H1 (cell line): ENCODE measurements at regions of chr13 and their contacts with region 1.

Region 1: DNA sequence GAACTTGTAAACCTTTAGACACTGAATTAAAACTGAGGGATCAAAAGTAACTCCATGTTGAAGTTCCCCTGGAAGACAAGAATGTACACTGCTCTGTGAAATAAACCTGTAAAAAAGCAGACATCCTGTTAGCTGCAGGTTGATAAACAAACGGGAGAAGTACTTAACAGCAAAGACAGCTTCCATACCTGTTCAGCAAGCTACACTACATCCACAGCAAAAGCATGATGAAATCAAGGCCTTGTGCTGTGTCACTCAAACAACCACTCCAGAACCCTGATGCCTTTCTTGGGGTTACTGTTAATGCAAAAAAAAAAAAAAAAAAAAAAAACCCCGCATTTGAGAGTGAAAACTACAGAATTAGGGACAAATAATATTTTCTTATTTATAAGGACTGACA is 20.8 kb downstream of the ANKRD10 start:
- DNase-seq: no peak
- H3K4me3 ChIP-seq: no peak overlapping the region
- H3K27ac ChIP-seq: no peak overlapping the region
- H3K4me1 ChIP-seq: no peaks in the 10 kb centered on the region
- H3K27me3 ChIP-seq: no peaks in the 10 kb centered on the region
- CTCF ChIP-seq: no peak
- EP300 ChIP-seq: no peak
- POLR2A ChIP-seq: no peak
- RAD21 ChIP-seq: no peak

Region 2: DNA sequence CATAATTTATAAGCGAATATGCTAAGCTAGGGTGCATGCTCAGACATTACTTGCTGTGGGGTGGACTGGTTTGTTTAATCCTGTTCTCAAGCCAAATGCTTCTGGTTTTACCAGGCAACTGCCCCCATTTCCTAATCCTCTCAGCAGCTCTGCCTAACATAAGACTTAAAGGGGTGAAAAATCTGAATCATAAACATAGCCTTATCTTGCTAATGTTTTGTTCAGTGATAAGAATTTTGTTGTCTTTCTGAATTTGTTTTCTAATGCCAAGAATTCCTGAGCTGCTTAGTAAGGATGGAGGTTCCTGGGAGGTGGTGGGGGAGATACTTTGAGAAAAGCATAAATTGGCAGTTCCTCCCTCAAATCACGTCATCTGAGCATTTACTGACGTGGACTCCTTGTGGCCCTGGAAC is 137.9 kb before region 1 on chr13:
- CTCF ChIA-PET with region 1: no interaction called
- POLR2A ChIA-PET with region 1: no interaction called
- DNase-seq: peak in 1 of 2 experiments; percentile 21
- H3K4me3 ChIP-seq: no peak overlapping the region
- H3K27ac ChIP-seq: no peak overlapping the region
- H3K4me1 ChIP-seq: peaks cover 0 to 9% (median 2%) of the 10 kb centered on the region in 4 experiments; a peak in 5 of 7 replicates
- H3K27me3 ChIP-seq: no peaks in the 10 kb centered on the region
- CTCF ChIP-seq: no peak
- EP300 ChIP-seq: no peak
- POLR2A ChIP-seq: no peak
- RAD21 ChIP-seq: no peak

Region 3: DNA sequence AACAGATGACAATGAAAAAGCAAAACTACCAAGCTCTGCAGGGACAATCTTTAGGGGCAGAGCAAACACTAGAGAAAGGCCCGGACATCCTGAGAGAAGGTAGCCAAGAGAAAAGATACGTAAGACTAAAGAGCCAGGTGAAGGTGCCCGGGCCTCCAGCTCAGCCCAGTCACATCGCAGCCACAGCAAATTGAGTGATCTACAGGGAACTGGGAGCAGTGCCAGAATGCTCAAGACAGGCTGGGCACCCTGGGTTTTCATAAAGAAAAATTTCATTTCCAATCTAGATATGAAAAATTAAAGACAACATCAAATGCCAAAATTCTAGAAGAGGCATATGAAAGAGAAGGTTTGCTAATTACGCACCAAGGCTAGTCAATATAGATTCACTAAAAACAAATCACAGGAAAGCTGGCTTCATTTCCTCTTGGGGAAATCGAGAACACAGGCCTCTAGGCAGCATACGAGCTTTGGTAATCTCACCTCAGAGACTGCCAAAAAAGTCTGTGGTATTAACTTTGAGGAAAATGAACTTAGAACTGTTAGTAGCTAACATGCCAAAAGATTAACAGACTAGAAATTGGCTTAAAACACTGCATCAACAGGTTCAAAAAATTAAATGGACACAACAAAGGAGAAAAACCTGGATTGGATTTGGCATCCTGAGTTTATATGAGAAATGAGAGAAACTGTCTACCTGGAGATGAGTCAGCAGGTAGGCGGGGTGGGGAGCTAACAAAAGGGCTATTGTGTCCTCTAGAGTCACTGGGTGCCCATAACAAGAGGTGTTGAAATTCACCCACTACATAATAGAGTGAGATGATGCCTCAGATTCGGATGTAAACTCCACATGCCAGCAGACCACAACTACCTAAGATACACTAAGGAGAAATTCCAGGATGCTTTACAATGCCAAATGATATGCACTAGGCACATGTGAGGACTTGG is 14.1 kb after region 1 on chr13:
- CTCF ChIA-PET with region 1: interaction called, 12 read pairs
- POLR2A ChIA-PET with region 1: interaction called, 50 read pairs
- DNase-seq: peak in 1 of 2 experiments; percentile 75
- H3K4me3 ChIP-seq: peak overlapping the region in 1 of 4 experiments; percentile 40; a peak in 3 of 8 replicates
- H3K27ac ChIP-seq: peak overlapping the region; percentile 70
- H3K4me1 ChIP-seq: peaks cover 21 to 43% (median 32%) of the 10 kb centered on the region in 4 experiments
- H3K27me3 ChIP-seq: no peaks in the 10 kb centered on the region
- CTCF ChIP-seq: no peak
- EP300 ChIP-seq: no peak
- POLR2A ChIP-seq: peak; percentile 36 to 65
- RAD21 ChIP-seq: no peak

Region 4: DNA sequence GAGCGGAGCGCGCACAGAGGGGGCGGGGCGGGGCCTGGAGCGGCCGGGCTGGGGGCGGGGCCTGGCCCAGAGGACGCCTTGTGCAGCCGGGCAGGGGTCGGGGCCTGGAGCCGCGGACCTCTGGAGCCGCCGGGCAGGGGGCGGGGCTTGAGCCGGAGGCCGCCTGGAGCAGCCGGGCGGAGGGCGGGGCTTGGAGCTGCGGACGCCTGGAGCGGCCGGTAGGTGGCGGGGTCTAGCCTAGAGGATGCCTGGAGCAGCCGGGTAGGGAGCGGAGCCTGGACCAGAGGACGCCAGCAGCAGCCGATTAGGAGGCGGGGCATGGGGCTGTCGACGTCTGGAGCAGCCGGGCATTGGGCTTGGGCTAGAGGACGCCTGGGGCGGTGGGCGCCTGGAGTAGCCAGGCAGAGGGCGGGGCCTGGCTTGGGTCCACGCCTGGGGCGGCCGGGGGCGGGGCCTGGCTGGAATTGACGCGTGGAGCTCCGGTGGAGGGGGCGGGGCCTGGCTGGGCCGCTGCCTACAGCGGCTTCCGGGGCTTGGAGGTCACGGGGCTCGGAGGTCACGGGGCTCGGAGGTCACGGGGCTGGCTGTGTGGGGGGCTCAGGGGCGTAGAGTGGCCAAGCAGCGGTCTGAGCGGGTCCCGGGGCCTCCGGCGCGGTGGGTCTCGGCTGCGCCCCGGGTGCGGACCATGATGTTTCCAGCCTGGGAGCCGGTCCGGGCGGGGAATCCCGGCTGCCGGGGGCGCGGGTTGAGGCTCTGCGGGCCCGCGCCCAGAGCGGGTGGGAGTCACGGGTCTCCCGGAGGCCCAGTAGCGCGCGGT is 21.2 kb after region 1 on chr13 and contains the start of gene ANKRD10:
- CTCF ChIA-PET with region 1: no interaction called
- POLR2A ChIA-PET with region 1: interaction called, 50 read pairs
- DNase-seq: peak; percentile 99
- H3K4me3 ChIP-seq: peak within 1 kb of the TSS; percentile 86 to 100 (median 95)
- H3K27ac ChIP-seq: peak within 1 kb of the TSS; percentile 98
- H3K4me1 ChIP-seq: peaks cover 3 to 11% (median 7%) of the 10 kb centered on the region in 4 experiments; a peak in 6 of 7 replicates
- H3K27me3 ChIP-seq: no peaks in the 10 kb centered on the region
- CTCF ChIP-seq: peak; percentile 75 to 83 (median 81)
- EP300 ChIP-seq: no peak
- POLR2A ChIP-seq: peak; percentile 59 to 75
- RAD21 ChIP-seq: peak; percentile 63 to 70
- total RNA-seq, gene ANKRD10: 201 and 218 TPM in 2 replicates

Region 5: DNA sequence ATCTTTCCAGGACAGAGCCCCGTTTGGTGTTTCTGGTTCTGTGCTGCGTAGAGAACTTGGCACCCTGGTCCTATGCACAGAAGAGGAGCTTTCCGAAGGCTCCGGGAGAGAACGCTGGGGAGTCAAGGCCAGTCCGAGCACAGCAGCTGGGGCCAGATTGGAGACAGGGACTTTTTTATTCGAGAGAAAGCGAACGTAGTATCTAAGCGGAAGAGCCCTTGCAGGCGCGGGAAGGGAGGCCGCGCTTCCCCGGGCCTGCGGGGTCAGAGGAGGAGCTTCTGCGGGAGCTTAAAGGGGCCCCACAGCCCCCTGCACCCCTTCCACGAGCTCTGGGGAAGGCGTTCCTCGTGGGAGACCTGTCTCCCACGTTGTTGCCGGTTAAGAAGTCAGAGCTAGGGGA is 172.4 kb after region 1 on chr13:
- CTCF ChIA-PET with region 1: no interaction called
- POLR2A ChIA-PET with region 1: no interaction called
- DNase-seq: no peak
- H3K4me3 ChIP-seq: peak overlapping the region in 2 of 4 experiments; percentile 10 to 68; a peak in 2 of 8 replicates
- H3K27ac ChIP-seq: no peak overlapping the region
- H3K4me1 ChIP-seq: peaks cover 12 to 32% (median 23%) of the 10 kb centered on the region in 4 experiments
- H3K27me3 ChIP-seq: peaks cover 0 to 16% (median 11%) of the 10 kb centered on the region in 4 experiments; a peak in 6 of 7 replicates
- CTCF ChIP-seq: no peak
- EP300 ChIP-seq: no peak
- POLR2A ChIP-seq: no peak
- RAD21 ChIP-seq: no peak